PC-9 (cell line): ENCODE measurements at regions of chr9 and their contacts with region 1.

Region 1: DNA sequence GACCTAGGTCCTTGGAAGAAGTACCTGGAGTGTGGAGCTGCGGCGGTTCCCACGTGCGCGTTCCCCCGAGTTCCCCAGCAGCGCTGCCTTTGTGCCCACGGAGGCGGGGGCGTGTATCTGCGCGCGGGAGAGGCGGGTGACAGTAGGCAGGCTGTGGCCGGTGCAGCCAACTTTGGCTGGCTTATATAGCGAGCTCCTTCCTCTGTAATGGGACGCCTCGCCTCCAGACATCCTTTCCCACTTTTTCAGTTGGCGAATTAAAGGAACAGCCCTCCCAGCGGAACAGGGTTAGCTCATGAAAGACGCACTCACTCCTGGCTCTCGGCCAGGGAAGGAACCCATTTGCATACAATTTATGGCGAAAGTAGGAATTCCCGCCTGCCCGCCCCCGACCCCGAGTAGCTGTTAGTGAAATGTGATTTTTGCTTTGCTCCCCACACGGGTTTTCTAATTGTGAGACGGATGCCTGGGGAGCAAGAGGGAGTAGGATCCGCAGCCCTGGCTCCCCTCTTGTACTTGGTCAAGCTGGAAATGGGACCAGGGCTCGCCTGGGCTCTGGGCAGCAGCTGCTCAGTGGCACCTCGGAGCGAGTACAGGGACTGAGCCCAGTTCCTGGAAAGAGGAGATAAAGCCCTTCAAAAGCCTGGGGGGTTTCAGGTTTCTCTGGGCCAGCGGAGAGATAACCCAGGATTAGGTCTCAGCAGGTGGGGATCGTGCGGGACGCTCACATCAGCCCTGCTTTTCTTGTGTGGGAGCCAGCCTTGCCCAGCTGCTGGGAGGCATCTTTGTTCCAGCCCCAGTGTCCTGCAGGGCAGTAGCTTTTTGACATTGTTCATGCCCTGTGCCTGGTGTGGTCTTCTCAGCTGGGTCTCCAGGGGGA is at the start of gene TNC:
- DNase-seq: peak in 1 of 2 experiments; percentile 55
- H3K4me3 ChIP-seq: peak within 1 kb of the TSS; percentile 48; the same call in 1 of the 2 replicates
- H3K27ac ChIP-seq: peak within 1 kb of the TSS; percentile 17; the same call in 1 of the 2 replicates
- H3K4me1 ChIP-seq: peaks cover 64% of the 10 kb centered on the region
- H3K27me3 ChIP-seq: peaks cover 1% of the 10 kb centered on the region; the same call in 1 of the 2 replicates
- CTCF ChIP-seq: no peak
- total RNA-seq, gene TNC: 1.1 and 1.9 TPM in 2 replicates

Region 2: DNA sequence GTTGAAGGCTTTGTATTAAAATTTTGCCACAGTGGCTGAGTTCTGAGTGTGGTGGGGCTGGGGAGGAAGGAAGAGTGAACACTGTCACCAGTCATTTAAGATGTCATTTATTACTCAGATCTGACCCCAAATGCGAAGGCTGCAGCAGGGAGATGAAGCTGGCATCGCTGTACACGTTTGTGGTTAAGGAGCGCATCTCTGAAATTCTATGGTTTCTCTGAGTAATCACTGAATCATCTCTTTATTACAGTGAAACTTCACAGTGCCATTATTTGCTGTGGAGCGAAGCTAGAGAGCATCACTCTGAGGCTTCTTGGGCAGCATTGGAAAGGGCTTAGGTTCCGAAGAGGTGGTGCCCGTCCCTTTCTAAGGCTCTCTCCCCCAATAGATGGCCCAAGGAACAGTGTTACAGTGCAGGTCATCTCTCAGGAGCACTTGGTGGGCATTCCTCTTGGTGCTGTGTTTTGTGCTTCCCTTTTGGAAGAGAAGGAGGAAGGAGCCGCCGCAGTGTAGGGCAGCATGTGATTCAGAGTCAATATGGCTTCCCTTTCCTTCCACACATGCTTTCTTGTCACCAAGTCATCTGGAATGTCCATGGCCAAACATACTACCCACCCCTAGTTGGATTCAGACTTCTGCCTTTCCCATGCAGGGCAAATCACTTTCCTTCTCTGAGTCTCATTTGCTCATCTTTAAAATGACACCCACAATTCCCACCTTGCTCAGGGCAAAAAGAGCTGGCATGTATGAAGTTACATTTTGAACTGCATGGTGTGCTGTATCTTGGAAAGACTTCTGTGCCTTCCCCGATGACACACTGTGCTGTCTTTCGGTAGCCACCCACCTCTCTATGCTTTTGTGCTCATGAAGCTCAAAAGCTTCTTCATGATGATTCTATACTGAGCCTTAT is 426.9 kb before region 1 on chr9:
- CTCF ChIA-PET with region 1: no interaction called
- POLR2A ChIA-PET with region 1: no interaction called
- intact Hi-C with region 1: loop called (anchors 1 kb)
- DNase-seq: peak; percentile 69 to 95
- H3K4me3 ChIP-seq: no peak overlapping the region
- H3K27ac ChIP-seq: peak overlapping the region; percentile 79
- H3K4me1 ChIP-seq: peaks cover 35% of the 10 kb centered on the region
- H3K27me3 ChIP-seq: no peaks in the 10 kb centered on the region
- CTCF ChIP-seq: no peak

Region 3: DNA sequence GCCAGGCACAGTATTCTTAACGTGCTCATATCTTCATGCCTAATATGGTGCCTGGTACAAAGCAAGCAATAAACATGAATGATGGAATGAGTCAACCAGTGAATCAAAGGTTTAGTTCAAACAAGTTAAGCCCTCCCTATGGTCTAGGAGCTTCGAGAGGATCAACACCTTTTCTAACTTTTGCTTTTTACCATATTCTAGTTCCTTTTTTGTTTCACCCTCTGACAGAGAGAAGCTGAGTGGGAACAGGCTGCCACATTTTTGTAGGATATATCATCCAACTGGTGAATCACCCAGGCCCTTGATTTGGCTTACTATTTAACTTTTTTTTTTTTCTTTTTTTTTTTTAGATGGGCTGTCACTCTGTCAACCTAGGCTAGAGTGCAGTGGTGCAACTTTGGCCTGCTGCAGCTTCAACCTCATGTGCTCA is 39.0 kb after region 1 on chr9:
- CTCF ChIA-PET with region 1: no interaction called
- POLR2A ChIA-PET with region 1: no interaction called
- intact Hi-C with region 1: loop called (anchors 5 kb)
- DNase-seq: peak; percentile 41 to 84
- H3K4me3 ChIP-seq: no peak overlapping the region
- H3K27ac ChIP-seq: peak overlapping the region; percentile 43
- H3K4me1 ChIP-seq: peaks cover 15% of the 10 kb centered on the region
- H3K27me3 ChIP-seq: no peaks in the 10 kb centered on the region
- CTCF ChIP-seq: no peak

Region 4: DNA sequence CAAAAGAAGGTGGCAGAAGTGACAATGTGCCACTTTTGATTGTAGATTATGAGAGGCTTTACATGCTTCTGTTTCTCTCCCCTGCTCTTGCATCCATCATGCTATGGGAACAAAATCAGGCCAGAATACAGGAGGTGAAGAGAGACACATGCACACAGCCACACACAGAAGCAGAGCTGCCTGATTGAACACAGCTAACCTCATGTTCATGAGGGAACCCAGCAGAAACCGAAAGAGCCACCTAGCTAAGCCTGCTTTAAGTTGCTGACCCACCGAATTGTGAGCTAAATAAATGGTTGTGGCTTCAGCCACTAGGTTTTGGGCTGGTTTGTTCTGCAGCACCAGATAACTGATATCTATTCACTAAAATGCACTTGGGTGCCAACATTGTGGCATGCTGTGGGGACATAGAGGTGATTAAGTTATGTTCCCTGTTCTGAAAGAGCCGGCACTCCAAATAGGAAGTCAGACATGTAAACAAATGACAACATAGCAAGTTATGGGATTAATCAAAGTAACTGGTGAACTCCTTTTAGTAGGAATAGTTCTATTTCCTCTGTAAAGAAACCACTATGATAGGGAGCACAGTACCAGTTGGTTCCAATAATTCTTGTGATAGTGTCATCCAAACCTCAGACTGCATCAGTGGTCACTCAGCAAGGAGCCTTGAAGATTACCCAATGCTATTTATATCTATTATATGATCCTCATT is 93.3 kb after region 1 on chr9:
- CTCF ChIA-PET with region 1: no interaction called
- POLR2A ChIA-PET with region 1: interaction called, 4 read pairs
- intact Hi-C with region 1: loop called (anchors 5 kb)
- DNase-seq: no peak
- H3K4me3 ChIP-seq: no peak overlapping the region
- H3K27ac ChIP-seq: no peak overlapping the region
- H3K4me1 ChIP-seq: peaks cover 17% of the 10 kb centered on the region
- H3K27me3 ChIP-seq: no peaks in the 10 kb centered on the region
- CTCF ChIP-seq: no peak

Region 5: DNA sequence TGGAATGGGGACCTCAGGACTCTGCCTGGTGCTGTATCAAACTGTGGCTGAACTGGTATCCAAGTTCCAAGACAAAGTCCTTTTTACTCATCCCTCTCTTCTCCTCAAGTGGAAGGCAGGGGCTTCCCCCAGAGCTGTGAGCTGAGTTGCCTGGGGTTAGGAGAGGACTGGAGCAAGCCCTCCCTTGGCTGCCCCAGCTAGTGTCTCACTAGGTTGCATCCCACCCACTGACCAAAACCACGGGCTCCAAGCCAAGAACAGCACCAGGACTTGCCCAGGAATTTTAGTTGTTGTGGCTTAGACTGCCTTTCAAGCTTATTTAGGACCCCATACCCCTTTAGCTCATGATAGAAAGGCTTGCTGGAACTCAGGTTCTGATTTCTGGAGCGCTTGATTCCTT is 158.4 kb after region 1 on chr9:
- CTCF ChIA-PET with region 1: no interaction called
- POLR2A ChIA-PET with region 1: no interaction called
- intact Hi-C with region 1: loop called (anchors 5 kb)
- DNase-seq: no peak
- H3K4me3 ChIP-seq: no peak overlapping the region
- H3K27ac ChIP-seq: no peak overlapping the region
- H3K4me1 ChIP-seq: no peaks in the 10 kb centered on the region
- H3K27me3 ChIP-seq: no peaks in the 10 kb centered on the region
- CTCF ChIP-seq: no peak